SK-N-SH (cell line): ENCODE measurements at regions of chr1 and their contacts with region 1.

Region 1: DNA sequence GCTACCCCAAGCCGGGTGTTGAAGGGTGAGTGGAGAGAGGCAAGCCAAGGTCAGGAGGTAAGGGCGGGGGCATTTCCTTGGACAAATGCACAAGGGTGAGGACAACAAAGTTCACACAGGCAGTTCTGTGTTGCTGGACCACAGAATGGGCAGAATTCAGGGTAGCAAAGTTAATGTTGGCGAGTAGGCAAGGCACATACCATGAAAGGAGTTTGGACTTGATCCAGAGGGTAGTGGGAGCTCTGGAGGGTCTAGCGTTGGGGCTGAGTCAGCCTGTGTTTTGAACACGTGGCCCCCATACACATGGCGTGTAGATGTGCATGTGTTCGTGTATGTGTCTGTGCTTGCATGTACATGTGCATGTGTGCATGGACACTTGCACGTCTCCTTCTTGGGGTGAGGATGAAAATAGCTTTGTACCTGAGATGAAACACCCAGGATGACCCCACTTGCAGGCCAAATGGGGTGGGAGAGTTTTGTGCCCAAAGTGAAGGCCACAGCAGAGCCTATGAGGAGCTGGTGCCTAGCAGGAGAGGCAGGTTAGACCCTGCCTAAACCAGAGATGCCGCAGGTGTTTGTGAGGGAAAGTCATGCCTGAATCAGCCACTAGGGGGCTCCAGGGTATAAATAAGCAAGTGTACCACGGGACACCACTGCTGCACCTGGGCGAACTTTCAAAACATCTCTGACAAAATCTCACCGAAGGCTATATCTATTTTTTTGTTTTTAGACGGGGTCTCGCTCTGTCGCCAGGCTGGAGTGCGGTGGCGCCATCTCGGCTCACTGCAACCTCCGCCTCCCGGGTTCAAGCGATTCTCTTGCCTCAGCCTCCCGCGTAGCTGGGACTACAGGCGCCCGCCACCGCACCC is 21.8 kb downstream of the SLC27A3 start:
- DNase-seq: peak; percentile 90
- H3K4me3 ChIP-seq: no peak overlapping the region; a peak in 1 of 4 replicates
- H3K27ac ChIP-seq: no peak overlapping the region
- H3K4me1 ChIP-seq: no peaks in the 10 kb centered on the region; a peak in 1 of 4 replicates
- H3K27me3 ChIP-seq: no peaks in the 10 kb centered on the region
- CTCF ChIP-seq: peak; percentile 85
- EP300 ChIP-seq: no peak
- RAD21 ChIP-seq: peak; percentile 84

Region 2: DNA sequence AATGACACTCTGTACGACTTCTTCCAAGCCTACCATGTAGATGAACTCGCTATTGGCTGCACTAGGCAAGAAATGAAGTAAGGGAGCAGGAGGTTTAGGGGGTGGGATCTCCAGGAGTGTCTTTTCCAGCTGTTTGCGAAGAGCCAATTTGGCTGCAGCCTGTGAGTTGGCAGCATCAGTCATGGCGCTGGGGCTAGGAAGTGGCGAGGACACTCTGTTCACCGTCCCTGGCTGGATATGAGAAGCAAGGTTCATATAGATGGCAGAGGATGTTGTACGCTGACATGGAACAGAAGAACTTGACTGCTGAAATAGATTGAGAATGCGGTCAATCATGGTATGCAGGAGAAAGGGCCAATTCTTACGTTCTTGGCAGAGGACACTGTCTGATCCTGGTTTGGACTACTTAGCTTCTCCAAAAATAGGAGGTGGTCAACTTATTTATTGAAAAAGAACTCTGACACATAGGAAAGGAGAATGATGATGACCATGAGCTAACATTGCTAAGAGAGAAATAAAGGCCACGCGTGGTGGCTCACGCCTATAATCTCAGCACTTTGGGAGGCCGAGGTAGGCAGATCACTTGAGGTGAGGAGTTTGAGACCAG is 19.4 kb after region 1 on chr1:
- CTCF ChIA-PET with region 1: interaction called, 39 read pairs
- POLR2A ChIA-PET with region 1: no interaction called
- DNase-seq: no peak
- H3K4me3 ChIP-seq: no peak overlapping the region
- H3K27ac ChIP-seq: no peak overlapping the region
- H3K4me1 ChIP-seq: no peaks in the 10 kb centered on the region
- H3K27me3 ChIP-seq: no peaks in the 10 kb centered on the region
- CTCF ChIP-seq: no peak
- EP300 ChIP-seq: no peak
- RAD21 ChIP-seq: no peak

Region 3: DNA sequence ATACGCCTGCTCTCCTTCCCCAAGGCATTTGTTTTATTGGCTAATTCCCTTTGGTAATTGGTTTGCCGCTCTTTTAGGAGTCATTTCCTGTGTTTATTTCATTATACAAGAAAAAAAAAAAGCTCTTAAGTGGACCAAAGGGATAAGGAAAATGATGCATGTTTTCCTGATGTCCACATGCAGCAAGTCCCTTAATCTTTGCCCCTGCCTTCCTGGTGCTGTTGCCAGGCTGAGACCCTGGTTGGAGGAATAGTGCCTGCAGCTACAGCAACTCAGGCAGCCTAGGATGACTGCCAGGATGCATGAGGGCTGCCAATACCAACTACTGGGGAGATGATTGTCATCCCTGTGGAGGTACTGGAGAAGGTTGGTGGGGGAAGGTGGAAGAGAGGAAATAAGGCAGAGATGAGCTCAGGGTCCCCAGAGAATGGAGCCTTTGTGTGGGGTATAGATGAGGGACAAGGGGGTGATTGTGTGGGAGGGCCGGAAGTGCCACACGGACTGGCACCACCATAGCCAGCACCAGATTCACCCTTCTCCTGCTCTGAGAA is 131.8 kb after region 1 on chr1:
- CTCF ChIA-PET with region 1: interaction called, 14 read pairs
- POLR2A ChIA-PET with region 1: no interaction called
- DNase-seq: peak; percentile 82
- H3K4me3 ChIP-seq: no peak overlapping the region
- H3K27ac ChIP-seq: peak overlapping the region in 1 of 2 experiments; percentile 88; a peak in 2 of 4 replicates
- H3K4me1 ChIP-seq: peaks cover 5 to 21% of the 10 kb centered on the region in 2 experiments; a peak in 2 of 4 replicates
- H3K27me3 ChIP-seq: no peaks in the 10 kb centered on the region
- CTCF ChIP-seq: no peak
- EP300 ChIP-seq: peak in 1 of 2 experiments; percentile 74; a peak in 1 of 4 replicates
- RAD21 ChIP-seq: no peak

Region 4: GRCh38 chr1:153977250-153978240 is 180.5 kb after region 1 on chr1 and contains the start of gene JTB:
- CTCF ChIA-PET with region 1: interaction called, 11 read pairs
- POLR2A ChIA-PET with region 1: no interaction called
- DNase-seq: peak; percentile 89
- H3K4me3 ChIP-seq: peak within 1 kb of the TSS; percentile 92 to 95
- H3K27ac ChIP-seq: peak within 1 kb of the TSS; percentile 63 to 91; a peak in 3 of 4 replicates
- H3K4me1 ChIP-seq: peaks cover 5 to 16% of the 10 kb centered on the region in 2 experiments; a peak in 2 of 4 replicates
- H3K27me3 ChIP-seq: no peaks in the 10 kb centered on the region
- CTCF ChIP-seq: no peak
- EP300 ChIP-seq: no peak
- RAD21 ChIP-seq: no peak
- polyA plus RNA-seq, gene JTB: 118 and 122 TPM in 2 replicates